ENCODE measurements at regions of chr22 and their contacts with region 1.

Region 1: GRCh38 chr22:26428515-26429457 is at the start of gene ASPHD2:
- DNase-seq: peak; percentile 62 to 92 (median 80)
- ATAC-seq: peak; percentile 89
- H3K4me3 ChIP-seq: peak within 1 kb of the TSS; percentile 84 to 88
- H3K4me3 Mint-ChIP-seq: peak within 1 kb of the TSS; percentile 100
- H3K27ac ChIP-seq: peak within 1 kb of the TSS; percentile 89 to 96
- H3K27ac Mint-ChIP-seq: peak within 1 kb of the TSS; percentile 99
- H3K4me1 ChIP-seq: peaks cover 23% of the 10 kb centered on the region
- H3K4me1 Mint-ChIP-seq: peaks cover 34% of the 10 kb centered on the region
- H3K27me3 ChIP-seq: no peaks in the 10 kb centered on the region
- H3K27me3 Mint-ChIP-seq: no peaks in the 10 kb centered on the region
- CTCF ChIP-seq: no peak
- total RNA-seq, gene ASPHD2: 0.90 to 1.00 TPM

Region 2: GRCh38 chr22:25404928-25405816 is 1023.6 kb before region 1 on chr22:
- CTCF ChIA-PET with region 1: no interaction called
- POLR2A ChIA-PET with region 1: no interaction called
- intact Hi-C with region 1: loop called in 1 of 2 experiments (anchors 5 kb)
- DNase-seq: peak; percentile 28 to 81 (median 64)
- ATAC-seq: peak; percentile 91
- H3K4me3 ChIP-seq: peak overlapping the region; percentile 50 to 55
- H3K4me3 Mint-ChIP-seq: peak overlapping the region; percentile 93
- H3K27ac ChIP-seq: peak overlapping the region; percentile 50 to 78
- H3K27ac Mint-ChIP-seq: peak overlapping the region; percentile 69
- H3K4me1 ChIP-seq: peaks cover 30% of the 10 kb centered on the region
- H3K4me1 Mint-ChIP-seq: peaks cover 33% of the 10 kb centered on the region
- H3K27me3 ChIP-seq: no peaks in the 10 kb centered on the region
- H3K27me3 Mint-ChIP-seq: no peaks in the 10 kb centered on the region
- CTCF ChIP-seq: no peak

Region 3: DNA sequence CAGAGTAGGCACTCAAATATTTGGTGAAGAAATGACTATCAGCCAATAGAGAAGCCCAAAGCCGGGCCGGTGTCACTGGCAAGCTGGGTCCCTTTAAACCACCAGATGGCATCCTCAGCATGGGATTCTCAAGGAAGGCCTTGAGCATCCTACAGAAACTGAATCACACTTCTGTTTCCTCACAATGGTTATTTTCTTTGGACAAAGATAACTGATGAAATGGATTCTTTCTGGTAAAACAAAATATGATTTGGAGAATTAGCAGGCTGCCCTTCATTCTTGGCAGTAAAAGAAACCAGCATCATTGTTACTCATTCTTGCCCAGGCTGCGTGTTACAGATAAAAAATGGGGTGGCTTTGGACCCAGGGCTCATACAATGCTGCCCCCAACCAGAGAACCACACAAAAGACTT is 30.0 kb before region 1 on chr22:
- CTCF ChIA-PET with region 1: no interaction called
- POLR2A ChIA-PET with region 1: no interaction called
- intact Hi-C with region 1: loop called in 1 of 2 experiments (anchors 2 kb)
- DNase-seq: peak in 8 of 9 experiments; percentile 36 to 63 (median 50)
- ATAC-seq: peak; percentile 52
- H3K4me3 ChIP-seq: no peak overlapping the region
- H3K4me3 Mint-ChIP-seq: no peak overlapping the region
- H3K27ac ChIP-seq: no peak overlapping the region
- H3K27ac Mint-ChIP-seq: no peak overlapping the region
- H3K4me1 ChIP-seq: no peaks in the 10 kb centered on the region
- H3K4me1 Mint-ChIP-seq: no peaks in the 10 kb centered on the region
- H3K27me3 ChIP-seq: no peaks in the 10 kb centered on the region
- H3K27me3 Mint-ChIP-seq: peaks cover 4% of the 10 kb centered on the region
- CTCF ChIP-seq: peak; percentile 36

Region 4: DNA sequence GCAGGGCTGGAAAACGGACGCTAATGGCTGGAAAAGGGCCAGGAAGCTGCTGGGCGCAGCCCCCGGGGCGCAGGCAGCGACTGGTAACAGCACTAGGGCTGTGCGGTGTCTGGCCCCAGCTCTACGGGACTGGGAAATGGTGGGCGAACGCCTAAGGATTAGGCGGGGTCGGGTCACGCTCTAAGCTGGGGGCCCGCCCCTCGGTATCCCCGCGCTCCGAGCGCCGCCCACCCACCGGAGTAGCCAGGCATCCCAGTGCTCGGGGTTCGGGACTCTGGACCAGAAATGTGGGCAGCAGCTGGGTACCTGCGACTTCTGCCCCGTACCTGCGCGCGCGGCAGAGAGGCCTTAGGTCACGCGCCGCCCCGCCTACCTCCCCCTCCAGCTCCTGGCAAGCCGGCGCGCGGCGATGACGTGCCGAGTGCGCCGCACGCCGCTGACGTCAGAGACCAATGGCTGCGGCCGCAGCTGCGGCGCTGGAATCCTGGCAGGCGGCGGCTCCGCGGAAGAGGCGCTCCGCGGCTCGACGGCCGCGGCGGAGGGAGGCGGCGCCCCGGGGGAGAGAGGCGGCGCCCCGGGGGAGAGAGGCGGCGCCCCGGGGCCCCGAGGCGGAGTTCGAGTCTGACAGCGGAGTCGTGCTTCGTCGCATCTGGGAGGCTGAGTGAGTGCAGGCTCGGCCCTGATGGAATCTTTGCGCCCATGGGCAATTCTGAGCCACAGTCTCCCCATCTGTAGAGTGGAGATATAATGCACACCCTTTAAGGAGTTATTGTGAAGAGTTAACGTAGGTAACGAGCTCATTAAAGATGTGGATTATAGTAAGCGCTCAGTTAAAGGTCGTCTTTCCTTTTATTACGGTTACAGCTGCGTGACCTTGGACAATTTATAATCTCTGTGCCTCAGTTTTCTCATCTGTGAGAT is 54.9 kb after region 1 on chr22 and contains the starts of genes HPS4 and SRRD:
- CTCF ChIA-PET with region 1: no interaction called
- POLR2A ChIA-PET with region 1: interaction called, 26 read pairs
- intact Hi-C with region 1: loop called (anchors 1 kb)
- DNase-seq: peak; percentile 87 to 97 (median 93)
- ATAC-seq: peak; percentile 83
- H3K4me3 ChIP-seq: peak within 1 kb of the TSS; percentile 78 to 97
- H3K4me3 Mint-ChIP-seq: peak within 1 kb of the TSS; percentile 95
- H3K27ac ChIP-seq: peak within 1 kb of the TSS; percentile 85 to 94
- H3K27ac Mint-ChIP-seq: peak within 1 kb of the TSS; percentile 99
- H3K4me1 ChIP-seq: peaks cover 53% of the 10 kb centered on the region
- H3K4me1 Mint-ChIP-seq: peaks cover 69% of the 10 kb centered on the region
- H3K27me3 ChIP-seq: no peaks in the 10 kb centered on the region
- H3K27me3 Mint-ChIP-seq: no peaks in the 10 kb centered on the region
- CTCF ChIP-seq: no peak
- total RNA-seq, gene HPS4: 67.0 to 71.0 TPM
- total RNA-seq, gene SRRD: 22.1 to 24.1 TPM

Region 5: DNA sequence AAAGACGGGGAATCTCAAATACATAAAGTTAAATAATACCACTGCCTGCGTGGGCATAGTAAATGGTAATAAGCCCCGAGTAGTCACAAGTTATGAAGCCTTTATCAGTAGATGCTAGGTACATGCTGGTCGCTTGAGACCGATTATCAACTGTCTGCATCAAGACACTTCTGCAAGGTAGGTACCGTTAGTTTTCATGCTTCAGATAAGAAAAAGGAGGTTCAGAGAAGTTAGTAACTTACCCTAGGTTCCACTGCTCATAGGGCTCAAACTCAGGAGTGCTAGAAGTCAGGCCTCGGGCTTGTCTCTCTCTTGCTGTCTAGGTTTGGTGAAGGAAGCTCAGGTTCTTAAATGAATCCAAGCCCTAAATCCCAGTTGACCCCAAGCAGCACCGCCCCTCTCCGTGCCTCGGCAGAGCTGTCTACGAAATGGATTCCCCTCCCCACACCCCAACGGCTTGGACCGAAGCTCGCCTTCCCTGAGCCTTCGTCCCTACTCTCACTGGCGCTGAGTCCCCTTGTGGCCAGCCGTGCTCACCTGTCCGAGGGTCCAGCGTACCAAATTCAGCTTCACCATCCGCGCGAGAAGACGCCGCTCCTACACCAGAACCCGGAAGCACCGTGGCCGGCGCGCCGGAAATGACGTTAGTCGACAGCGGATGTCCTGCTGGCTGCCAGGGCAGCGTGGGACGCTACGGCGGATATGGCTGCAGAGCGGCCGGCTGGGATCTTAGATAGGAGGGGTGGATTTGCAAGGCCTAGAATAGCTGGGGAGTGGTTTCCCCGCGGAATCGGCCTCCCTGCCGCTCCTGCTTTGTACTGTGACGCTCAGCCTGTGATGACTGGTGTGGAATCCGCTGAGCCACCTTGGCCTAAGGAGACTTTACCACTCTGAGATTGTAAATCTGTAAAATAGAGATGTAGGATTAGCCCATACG is 83.3 kb after region 1 on chr22 and contains the start of gene TFIP11:
- CTCF ChIA-PET with region 1: no interaction called
- POLR2A ChIA-PET with region 1: no interaction called
- intact Hi-C with region 1: loop called in 1 of 2 experiments (anchors 2 kb)
- DNase-seq: peak; percentile 76 to 94 (median 92)
- ATAC-seq: peak; percentile 86
- H3K4me3 ChIP-seq: peak within 1 kb of the TSS; percentile 78 to 90
- H3K4me3 Mint-ChIP-seq: peak within 1 kb of the TSS; percentile 96
- H3K27ac ChIP-seq: peak within 1 kb of the TSS; percentile 81 to 85
- H3K27ac Mint-ChIP-seq: peak within 1 kb of the TSS; percentile 99
- H3K4me1 ChIP-seq: peaks cover 25% of the 10 kb centered on the region
- H3K4me1 Mint-ChIP-seq: peaks cover 44% of the 10 kb centered on the region
- H3K27me3 ChIP-seq: no peaks in the 10 kb centered on the region
- H3K27me3 Mint-ChIP-seq: no peaks in the 10 kb centered on the region
- CTCF ChIP-seq: no peak
- total RNA-seq, gene TFIP11: 138 to 142 TPM

Region 6: GRCh38 chr22:26658671-26659478 is 230.1 kb after region 1 on chr22:
- CTCF ChIA-PET with region 1: no interaction called
- POLR2A ChIA-PET with region 1: no interaction called
- intact Hi-C with region 1: loop called in 1 of 2 experiments (anchors 2 kb)
- DNase-seq: peak in 8 of 9 experiments; percentile 62 to 87 (median 81)
- ATAC-seq: peak; percentile 74
- H3K4me3 ChIP-seq: peak overlapping the region; percentile 91 to 96
- H3K4me3 Mint-ChIP-seq: peak overlapping the region; percentile 91
- H3K27ac ChIP-seq: peak overlapping the region; percentile 21 to 57
- H3K27ac Mint-ChIP-seq: peak overlapping the region; percentile 96
- H3K4me1 ChIP-seq: peaks cover 20% of the 10 kb centered on the region
- H3K4me1 Mint-ChIP-seq: peaks cover 30% of the 10 kb centered on the region
- H3K27me3 ChIP-seq: no peaks in the 10 kb centered on the region
- H3K27me3 Mint-ChIP-seq: no peaks in the 10 kb centered on the region
- CTCF ChIP-seq: no peak